ENCODE measurements at regions of chr14 and their contacts with region 1.

Region 1: GRCh38 chr14:22589096-22589839 is at the start of gene DAD1:
- H3K4me3 Mint-ChIP-seq: peak within 1 kb of the TSS; percentile 83
- H3K27ac Mint-ChIP-seq: peak within 1 kb of the TSS; percentile 96
- H3K4me1 Mint-ChIP-seq: peaks cover 47% of the 10 kb centered on the region
- H3K27me3 Mint-ChIP-seq: peaks cover 13% of the 10 kb centered on the region

Region 2: GRCh38 chr14:22556990-22557623 is 32.2 kb before region 1 on chr14:
- intact Hi-C with region 1: loop called (anchors 2 kb)
- H3K4me3 Mint-ChIP-seq: peak overlapping the region; percentile 71
- H3K27ac Mint-ChIP-seq: peak overlapping the region; percentile 17
- H3K4me1 Mint-ChIP-seq: peaks cover 30% of the 10 kb centered on the region
- H3K27me3 Mint-ChIP-seq: peaks cover 1% of the 10 kb centered on the region

Region 3: DNA sequence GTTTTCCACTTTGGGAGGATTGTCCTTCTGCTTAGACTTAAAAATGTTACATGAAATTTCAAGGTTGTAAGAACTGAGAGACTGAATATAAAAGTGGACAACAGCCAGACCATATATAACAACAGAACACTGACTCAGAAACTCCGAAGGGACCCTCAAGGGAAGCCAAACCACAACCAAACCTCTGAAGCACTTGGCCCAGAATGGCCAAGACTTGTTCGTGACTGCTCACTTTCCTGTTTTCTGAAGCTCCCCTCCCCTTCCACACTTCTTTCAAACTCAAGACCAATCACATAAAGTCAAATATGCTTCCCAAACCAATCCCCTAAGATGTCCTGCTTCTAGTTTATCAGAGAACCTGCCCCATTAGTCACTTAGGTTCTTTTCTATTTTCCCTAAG is 41.2 kb after region 1 on chr14:
- intact Hi-C with region 1: no loop called
- H3K4me3 Mint-ChIP-seq: no peak overlapping the region
- H3K27ac Mint-ChIP-seq: no peak overlapping the region
- H3K4me1 Mint-ChIP-seq: no peaks in the 10 kb centered on the region
- H3K27me3 Mint-ChIP-seq: peaks cover 12% of the 10 kb centered on the region

Region 4: GRCh38 chr14:22689186-22689585 is 99.9 kb after region 1 on chr14:
- intact Hi-C with region 1: no loop called
- H3K4me3 Mint-ChIP-seq: no peak overlapping the region
- H3K27ac Mint-ChIP-seq: no peak overlapping the region
- H3K4me1 Mint-ChIP-seq: peaks cover 22% of the 10 kb centered on the region
- H3K27me3 Mint-ChIP-seq: peaks cover 38% of the 10 kb centered on the region

Region 5: DNA sequence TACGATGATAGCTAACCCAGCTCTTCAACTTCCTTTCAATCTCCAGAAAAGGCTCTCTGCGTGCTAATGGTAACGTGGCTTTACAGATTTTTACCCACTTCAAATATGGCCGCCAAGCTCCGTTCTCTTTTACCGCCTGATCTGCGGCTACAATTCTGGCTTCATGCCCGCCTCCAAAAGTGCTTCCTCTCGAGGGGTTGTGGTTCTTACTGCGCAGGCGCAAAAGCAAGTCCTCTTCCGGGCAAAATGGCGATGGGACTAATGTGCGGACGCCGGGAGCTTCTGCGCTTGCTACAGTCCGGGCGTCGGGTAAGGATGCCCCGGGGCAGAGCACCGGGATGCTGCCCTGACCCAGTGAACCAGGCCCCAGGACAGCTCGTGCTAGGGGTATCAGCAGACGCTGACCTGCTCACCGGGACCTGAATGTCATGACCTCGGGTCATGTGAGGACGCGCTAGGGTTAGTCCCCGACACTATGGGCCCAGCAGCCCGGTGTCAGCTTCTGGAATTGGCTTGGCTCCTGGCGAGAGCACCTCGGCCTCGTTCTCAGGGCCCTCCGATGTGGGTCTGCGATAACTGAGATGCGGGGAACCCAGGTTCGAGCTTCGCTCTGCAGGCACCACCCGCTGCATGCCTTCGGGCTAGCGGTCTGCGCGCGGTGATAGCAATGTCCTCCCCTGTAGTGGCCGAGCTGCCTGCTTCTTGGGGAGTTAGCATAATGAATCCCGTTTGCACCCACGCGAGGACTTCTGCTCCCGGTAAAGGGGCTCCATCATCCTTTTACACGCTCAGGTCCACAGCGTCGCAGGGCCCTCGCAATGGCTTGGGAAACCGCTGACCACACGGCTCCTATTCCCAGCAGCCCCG is 177.4 kb after region 1 on chr14 and contains the start of gene OXA1L:
- intact Hi-C with region 1: loop called (anchors 5 kb)
- H3K4me3 Mint-ChIP-seq: peak within 1 kb of the TSS; percentile 90
- H3K27ac Mint-ChIP-seq: peak within 1 kb of the TSS; percentile 98
- H3K4me1 Mint-ChIP-seq: peaks cover 40% of the 10 kb centered on the region
- H3K27me3 Mint-ChIP-seq: no peaks in the 10 kb centered on the region

Measured in dendritic cell treated with granulocyte-macrophage colony-stimulating factor and Interleukin-4, amounts not matched to agents 40 ng/mL and 50 ng/mL, for 4 days (primary cell).